Adrenal gland (tissue), 19 donors: ENCODE measurements at regions of chr7 and their contacts with region 1.

Region 1: GRCh38 chr7:155598810-155599210 is 45.7 kb upstream of the RBM33 start:
- DNase-seq: peak; percentile 65 to 93 (median 83)
- H3K4me3 ChIP-seq: no peak overlapping the region
- H3K27ac ChIP-seq: no peak overlapping the region
- H3K4me1 ChIP-seq: peaks cover 0 to 5% of the 10 kb centered on the region in 2 donors
- H3K27me3 ChIP-seq: peaks cover 35% of the 10 kb centered on the region
- CTCF ChIP-seq: peak; percentile 88 to 98 (median 92)
- POLR2A ChIP-seq: no peak

Region 2: DNA sequence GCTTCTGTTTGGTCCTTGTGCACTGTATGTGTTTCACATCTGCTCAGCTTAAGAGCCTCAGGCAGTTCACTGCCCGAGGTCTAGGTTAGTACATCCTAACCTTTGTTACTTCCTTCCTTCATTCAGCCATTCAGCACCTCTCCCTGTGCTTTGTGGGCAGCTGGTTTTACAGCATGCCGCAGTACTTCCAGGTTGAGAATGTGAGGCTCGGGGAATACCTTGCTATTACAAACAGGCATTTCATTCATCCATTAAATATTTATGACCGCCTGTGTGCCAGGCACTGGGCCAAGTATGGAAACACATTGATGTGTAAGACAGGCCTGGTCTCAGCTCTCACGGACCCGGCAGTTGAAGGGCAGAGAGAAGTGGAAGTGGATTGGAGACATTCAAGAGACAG is 131.0 kb after region 1 on chr7:
- intact Hi-C with region 1: loop called in 1 of 2 experiments (anchors 5 kb)
- DNase-seq: peak in 2 of 7 donors; percentile 25 to 33
- H3K4me3 ChIP-seq: no peak overlapping the region
- H3K27ac ChIP-seq: no peak overlapping the region
- H3K4me1 ChIP-seq: peaks cover 4 to 20% of the 10 kb centered on the region in 2 donors
- H3K27me3 ChIP-seq: no peaks in the 10 kb centered on the region
- CTCF ChIP-seq: no peak
- POLR2A ChIP-seq: no peak

Region 3: DNA sequence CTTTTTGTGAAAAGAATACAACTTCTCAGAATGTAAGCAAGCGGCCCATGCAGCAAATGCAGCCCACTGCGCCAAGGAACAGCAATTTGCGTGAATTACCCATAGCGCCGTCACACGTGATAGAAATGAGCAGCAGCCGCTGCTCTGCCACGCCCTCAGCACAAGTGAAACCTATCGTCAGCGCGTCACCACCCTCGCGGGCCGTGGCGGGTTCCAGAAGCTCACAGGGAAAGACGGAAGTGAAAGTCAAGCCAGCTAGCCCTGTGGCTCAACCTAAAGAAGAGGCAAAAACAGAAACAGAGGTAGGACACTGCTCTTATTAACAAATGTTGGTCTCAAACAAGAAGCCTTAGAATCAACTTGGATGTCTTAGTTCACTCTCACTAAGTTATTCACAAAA is 143.0 kb after region 1 on chr7:
- intact Hi-C with region 1: loop called in 1 of 2 experiments (anchors 5 kb)
- DNase-seq: peak in 2 of 7 donors; percentile 33 to 36
- H3K4me3 ChIP-seq: no peak overlapping the region
- H3K27ac ChIP-seq: no peak overlapping the region
- H3K4me1 ChIP-seq: peaks cover 8 to 19% of the 10 kb centered on the region in 2 donors
- H3K27me3 ChIP-seq: no peaks in the 10 kb centered on the region
- CTCF ChIP-seq: no peak
- POLR2A ChIP-seq: no peak

Region 4: DNA sequence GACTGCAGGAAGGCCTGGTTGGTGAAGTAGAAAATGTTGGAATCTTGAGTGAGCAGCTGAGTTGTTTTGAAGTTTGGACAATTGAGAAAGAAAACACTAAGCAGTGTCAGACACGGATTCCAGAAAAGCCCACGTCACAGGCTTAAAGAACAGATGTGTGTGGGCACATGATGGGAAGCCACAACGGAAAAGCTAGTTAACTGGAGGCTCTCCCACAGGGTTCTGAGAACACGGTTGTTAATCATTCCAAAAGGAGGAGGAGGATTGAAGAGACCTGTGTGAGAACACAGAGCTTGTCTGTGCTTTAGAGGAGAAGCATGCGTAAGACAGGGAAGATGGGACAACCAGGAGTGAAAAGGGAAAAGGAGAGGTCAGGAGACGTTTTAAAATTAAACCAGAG is 170.9 kb after region 1 on chr7:
- intact Hi-C with region 1: loop called in 1 of 2 experiments (anchors 5 kb)
- DNase-seq: no peak
- H3K4me3 ChIP-seq: no peak overlapping the region
- H3K27ac ChIP-seq: no peak overlapping the region
- H3K4me1 ChIP-seq: no peaks in the 10 kb centered on the region
- H3K27me3 ChIP-seq: no peaks in the 10 kb centered on the region
- CTCF ChIP-seq: no peak
- POLR2A ChIP-seq: no peak